ENCODE measurements at regions of chrX and their contacts with region 1.

Region 1: DNA sequence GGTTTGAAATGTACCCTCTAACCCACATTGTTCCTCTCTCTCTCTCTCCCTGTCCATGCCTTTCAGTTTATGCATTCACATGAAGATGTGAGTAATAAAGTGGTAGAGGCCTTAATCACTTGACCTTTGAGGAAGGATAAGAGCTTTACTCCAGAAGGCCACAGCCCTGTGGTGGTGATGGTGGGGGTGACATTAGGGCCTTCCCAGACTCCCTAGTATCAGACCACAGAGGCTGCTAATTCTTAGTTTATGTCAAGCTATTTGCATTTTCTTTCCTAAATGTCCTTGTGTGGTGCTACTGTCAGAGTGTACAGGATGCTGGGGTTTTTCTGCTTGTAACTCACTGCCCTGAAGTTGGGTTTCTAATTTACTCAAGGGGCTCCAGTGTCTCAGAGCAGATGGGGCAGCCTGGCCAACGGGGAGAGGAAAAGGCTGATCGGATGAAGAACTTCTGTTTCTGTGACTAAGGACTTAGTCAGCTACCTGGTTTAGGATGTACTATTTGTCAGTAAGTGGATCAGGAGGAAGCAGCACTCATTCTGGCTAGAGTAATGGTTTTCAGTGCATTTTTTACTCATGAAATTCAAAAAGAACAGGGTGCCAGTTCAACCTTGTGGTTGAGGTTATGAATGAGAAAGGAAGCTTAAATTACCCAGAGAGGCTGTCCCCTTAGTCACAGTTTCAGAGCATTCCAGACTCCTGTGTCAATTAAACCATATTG is 509.6 kb upstream of the DIPK2B start:
- DNase-seq: peak; percentile 78
- ATAC-seq: peak; percentile 90
- H3K4me3 Mint-ChIP-seq: no peak overlapping the region
- H3K27ac Mint-ChIP-seq: peak overlapping the region; percentile 85
- H3K4me1 Mint-ChIP-seq: peaks cover 62% of the 10 kb centered on the region
- H3K27me3 Mint-ChIP-seq: no peaks in the 10 kb centered on the region

Region 2: DNA sequence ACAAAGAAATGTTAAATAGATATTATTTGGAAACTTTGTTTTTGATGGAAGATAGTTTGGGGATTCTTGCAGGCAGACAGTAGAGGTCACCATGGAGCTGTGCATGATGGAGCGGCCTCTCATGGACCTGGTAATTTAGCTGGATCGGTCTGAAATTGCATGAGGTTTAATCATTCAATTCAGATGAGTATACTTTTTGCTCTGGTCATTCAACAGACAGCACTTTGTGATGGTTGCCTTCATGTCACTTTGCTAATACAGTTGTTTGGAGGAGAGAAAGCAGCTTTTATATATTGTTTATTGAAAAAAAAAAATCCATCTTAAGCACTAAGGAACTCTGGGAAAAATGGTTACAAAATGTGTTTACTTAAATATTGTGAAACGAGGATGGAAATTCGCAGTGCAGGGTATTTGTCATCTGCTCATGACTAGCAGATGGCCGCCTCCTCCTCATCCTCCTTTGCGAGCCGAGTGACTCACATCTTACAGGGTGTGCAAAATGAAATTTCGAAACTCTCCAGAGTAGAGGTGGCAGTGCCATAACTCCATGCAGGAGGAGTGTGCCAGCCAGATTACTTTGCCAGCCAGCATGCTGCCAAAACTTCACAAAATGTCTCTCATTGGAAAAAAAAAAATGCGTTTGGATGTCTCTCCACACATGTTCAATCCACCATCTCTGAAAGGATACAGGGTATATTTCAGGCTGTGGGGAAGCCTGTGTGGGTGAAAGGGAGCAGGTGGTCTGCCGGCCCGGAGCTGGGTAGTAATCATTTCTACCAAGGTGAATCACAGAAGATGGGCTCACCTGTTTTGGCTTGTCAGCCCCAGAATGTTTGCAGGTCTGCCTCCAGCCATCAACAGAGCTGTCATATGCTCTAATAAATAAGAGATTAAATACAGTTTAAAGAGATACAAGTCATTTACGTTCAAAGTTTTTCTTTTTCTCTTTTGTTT is 194.7 kb before region 1 on chrX:
- CTCF ChIA-PET with region 1: no interaction called
- POLR2A ChIA-PET with region 1: no interaction called
- intact Hi-C with region 1: loop called (anchors 5 kb)
- DNase-seq: peak; percentile 59
- ATAC-seq: peak; percentile 92
- H3K4me3 Mint-ChIP-seq: peak overlapping the region; percentile 43
- H3K27ac Mint-ChIP-seq: peak overlapping the region; percentile 39
- H3K4me1 Mint-ChIP-seq: peaks cover 23% of the 10 kb centered on the region
- H3K27me3 Mint-ChIP-seq: no peaks in the 10 kb centered on the region

Region 3: GRCh38 chrX:45699158-45699557 is 11.1 kb before region 1 on chrX:
- CTCF ChIA-PET with region 1: interaction called, 14 read pairs
- POLR2A ChIA-PET with region 1: interaction called, 4 read pairs
- intact Hi-C with region 1: no loop called
- DNase-seq: no peak
- ATAC-seq: no peak
- H3K4me3 Mint-ChIP-seq: no peak overlapping the region
- H3K27ac Mint-ChIP-seq: no peak overlapping the region
- H3K4me1 Mint-ChIP-seq: peaks cover 21% of the 10 kb centered on the region
- H3K27me3 Mint-ChIP-seq: no peaks in the 10 kb centered on the region

Region 4: DNA sequence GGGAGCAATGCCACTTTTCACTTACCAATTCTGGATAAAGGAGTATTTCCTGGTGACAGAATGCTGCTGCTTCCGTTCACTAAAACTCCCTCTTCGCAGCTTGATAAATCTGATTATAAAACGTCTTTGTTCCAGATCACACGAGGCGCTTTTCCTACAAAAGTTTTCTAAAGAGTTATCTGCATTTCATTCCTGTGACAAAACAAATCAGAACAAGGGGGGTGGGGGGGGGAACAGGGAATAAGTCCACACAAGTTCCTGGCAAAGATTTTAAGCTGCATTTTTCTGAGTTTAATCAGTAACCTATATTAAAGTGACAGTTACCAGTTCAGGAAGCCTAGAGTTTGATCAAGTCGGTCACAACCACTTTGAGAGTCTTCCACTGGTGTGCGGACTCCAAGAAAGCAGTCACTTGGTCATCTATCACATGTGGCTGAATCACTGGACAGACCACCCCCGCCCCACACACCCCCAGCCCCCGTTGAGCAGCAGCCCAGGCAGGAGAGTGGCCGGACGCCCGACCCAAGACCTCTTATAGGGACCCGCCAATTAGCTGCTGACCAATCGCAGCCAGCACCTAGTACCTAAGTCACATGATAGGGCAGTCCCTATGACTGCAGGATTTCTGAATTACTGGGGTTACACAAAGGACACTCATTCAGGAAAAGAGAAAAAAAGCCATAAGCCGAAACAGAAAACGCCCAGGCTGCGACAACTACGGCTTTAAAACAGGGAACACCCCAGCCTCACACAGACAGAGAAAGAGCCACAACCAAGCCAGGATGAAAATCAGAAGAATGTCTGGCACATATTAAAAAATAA is 59.7 kb after region 1 on chrX:
- CTCF ChIA-PET with region 1: no interaction called
- POLR2A ChIA-PET with region 1: interaction called, 6 read pairs
- intact Hi-C with region 1: loop called in 1 of 2 experiments (anchors 2 kb)
- DNase-seq: peak; percentile 60
- ATAC-seq: peak; percentile 63
- H3K4me3 Mint-ChIP-seq: peak overlapping the region; percentile 77
- H3K27ac Mint-ChIP-seq: peak overlapping the region; percentile 98
- H3K4me1 Mint-ChIP-seq: peaks cover 53% of the 10 kb centered on the region
- H3K27me3 Mint-ChIP-seq: no peaks in the 10 kb centered on the region

Region 5: DNA sequence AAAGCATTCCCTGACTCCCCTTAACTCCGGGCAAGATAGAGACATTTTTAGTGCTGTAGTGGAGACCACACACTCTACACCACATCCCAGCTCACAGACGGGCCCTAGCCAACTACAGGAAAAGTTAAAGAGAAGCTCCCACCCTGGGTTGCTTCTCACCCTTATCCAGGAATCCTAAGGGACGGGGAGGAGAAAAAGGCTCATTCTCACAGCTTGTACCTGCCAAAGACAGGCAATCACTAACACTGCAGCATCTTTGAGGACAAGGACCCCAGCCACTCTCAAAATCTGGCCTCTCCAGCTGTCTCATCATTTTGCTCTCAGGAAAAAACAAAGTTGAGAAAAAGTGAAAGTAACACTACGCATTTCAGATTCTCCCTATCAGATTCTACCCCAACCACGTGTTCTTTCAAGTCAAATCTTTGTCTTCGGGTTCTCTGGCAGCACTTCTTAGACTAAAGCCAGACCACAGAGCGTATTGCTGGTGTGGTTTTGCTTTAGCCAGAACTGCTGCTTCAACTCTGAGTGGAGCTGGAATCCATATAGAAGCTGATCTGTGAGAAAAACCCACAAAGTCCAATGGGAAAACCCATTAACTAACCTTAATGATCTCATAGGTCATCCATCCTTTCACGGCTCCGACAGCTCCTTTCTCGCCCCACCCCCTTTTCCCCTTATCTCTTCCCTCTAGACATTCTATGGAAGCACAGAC is 96.3 kb after region 1 on chrX:
- CTCF ChIA-PET with region 1: no interaction called
- POLR2A ChIA-PET with region 1: interaction called, 11 read pairs
- intact Hi-C with region 1: loop called (anchors 1 kb)
- DNase-seq: peak; percentile 65
- ATAC-seq: peak; percentile 52
- H3K4me3 Mint-ChIP-seq: peak overlapping the region; percentile 68
- H3K27ac Mint-ChIP-seq: peak overlapping the region; percentile 88
- H3K4me1 Mint-ChIP-seq: peaks cover 85% of the 10 kb centered on the region
- H3K27me3 Mint-ChIP-seq: no peaks in the 10 kb centered on the region

Region 6: DNA sequence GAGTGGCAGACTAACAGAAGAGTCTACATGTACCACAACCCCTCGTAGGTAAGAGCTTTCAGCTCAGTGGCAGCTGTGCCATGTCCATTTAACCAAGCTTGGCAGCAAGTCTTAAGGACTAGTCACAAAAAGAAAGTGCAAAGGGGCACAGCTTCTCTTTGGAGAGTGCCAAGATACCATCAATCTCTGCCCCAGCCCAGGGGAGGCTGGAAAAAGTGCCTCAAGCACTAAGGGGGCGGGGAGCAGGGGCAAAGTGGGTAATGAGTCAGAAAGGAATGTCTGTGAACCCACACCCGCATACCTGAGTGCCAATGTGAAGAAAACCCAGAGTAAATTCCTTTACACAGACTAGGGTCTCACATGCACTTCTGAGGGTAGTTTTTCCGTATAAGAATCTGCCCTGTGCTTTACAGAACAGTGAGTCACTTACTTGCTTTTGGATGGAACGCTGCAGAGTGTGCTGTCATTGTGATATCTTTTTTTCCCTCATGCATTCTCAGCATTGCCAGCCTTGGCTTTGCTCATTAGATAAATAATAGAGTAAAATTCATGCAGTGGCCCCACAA is 615.2 kb after region 1 on chrX:
- CTCF ChIA-PET with region 1: no interaction called
- POLR2A ChIA-PET with region 1: no interaction called
- intact Hi-C with region 1: loop called (anchors 5 to 10 kb)
- DNase-seq: peak; percentile 78
- ATAC-seq: peak; percentile 83
- H3K4me3 Mint-ChIP-seq: peak overlapping the region; percentile 3
- H3K27ac Mint-ChIP-seq: peak overlapping the region; percentile 76
- H3K4me1 Mint-ChIP-seq: peaks cover 62% of the 10 kb centered on the region
- H3K27me3 Mint-ChIP-seq: no peaks in the 10 kb centered on the region